ENCODE measurements at regions of chr11 and their contacts with region 1.

Region 1: DNA sequence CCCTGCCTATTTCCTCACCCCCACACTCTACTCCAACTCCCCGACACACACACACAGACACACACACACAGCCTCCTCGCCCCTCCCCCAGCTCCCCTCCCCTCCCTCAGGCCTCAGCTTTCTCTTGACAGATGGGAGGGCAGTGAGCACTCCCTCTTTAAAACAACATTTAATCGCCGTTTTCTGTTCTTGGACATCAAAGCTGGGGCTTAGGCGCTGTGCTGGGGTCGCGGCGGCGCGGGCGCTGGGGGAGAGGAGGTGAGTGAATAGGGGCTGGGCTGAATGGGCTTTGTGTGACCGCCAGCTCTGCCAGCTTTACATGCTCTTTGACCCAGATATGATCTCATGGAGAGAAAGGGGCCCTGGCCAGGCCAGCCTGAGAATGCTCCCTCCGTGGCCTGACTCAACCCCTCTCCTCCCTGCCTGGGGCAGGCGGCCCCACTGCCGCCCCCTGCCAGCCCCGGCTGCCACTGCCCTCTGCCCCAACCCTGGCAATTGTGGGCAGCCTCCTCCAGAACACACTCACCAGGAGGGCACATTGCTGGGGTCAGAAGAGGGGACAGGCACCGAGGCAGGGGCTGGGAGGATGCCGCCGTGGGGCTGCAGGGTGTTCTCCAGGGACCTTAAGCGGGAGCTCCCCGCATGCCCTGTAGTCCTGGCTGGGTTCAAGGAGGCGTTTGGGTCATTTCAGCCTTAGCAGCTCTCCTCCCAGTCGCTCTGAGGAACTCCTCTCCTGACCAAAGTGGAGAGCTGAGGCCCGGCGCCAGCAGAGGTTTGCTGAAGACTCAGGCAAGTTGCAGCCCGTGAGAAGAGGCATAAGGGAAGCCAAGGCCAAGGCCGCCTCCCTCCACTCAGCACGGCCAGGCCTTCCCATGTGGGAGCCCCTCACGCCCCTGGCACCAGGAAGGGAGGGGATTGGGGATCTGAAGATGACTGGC is 38.3 kb upstream of the NNMT start:
- DNase-seq: peak; percentile 74
- ATAC-seq: peak; percentile 24
- H3K4me3 ChIP-seq: no peak overlapping the region
- H3K27ac ChIP-seq: peak overlapping the region; percentile 55
- H3K4me1 ChIP-seq: peaks cover 32% of the 10 kb centered on the region
- H3K27me3 ChIP-seq: no peaks in the 10 kb centered on the region
- CTCF ChIP-seq: peak; percentile 25

Region 2: GRCh38 chr11:114060392-114061350 is 197.2 kb before region 1 on chr11:
- intact Hi-C with region 1: loop called (anchors 10 kb)
- DNase-seq: peak; percentile 76
- ATAC-seq: peak; percentile 7
- H3K4me3 ChIP-seq: peak overlapping the region; percentile 95
- H3K27ac ChIP-seq: peak overlapping the region; percentile 98
- H3K4me1 ChIP-seq: peaks cover 50% of the 10 kb centered on the region
- H3K27me3 ChIP-seq: no peaks in the 10 kb centered on the region
- CTCF ChIP-seq: no peak

Region 3: GRCh38 chr11:114208377-114208776 is 49.5 kb before region 1 on chr11:
- intact Hi-C with region 1: loop called (anchors 10 kb)
- DNase-seq: no peak
- ATAC-seq: peak; percentile 30
- H3K4me3 ChIP-seq: no peak overlapping the region
- H3K27ac ChIP-seq: no peak overlapping the region
- H3K4me1 ChIP-seq: peaks cover 18% of the 10 kb centered on the region
- H3K27me3 ChIP-seq: no peaks in the 10 kb centered on the region
- CTCF ChIP-seq: no peak